B cell (primary cell): ENCODE measurements at regions of chr19 and their contacts with region 1.

Region 1: GRCh38 chr19:5189318-5189607 is 151.3 kb downstream of the PTPRS start:
- DNase-seq: no peak
- ATAC-seq: no peak
- H3K4me3 ChIP-seq: no peak overlapping the region
- H3K4me3 Mint-ChIP-seq: no peak overlapping the region
- H3K27ac ChIP-seq: no peak overlapping the region
- H3K27ac Mint-ChIP-seq: no peak overlapping the region
- H3K4me1 ChIP-seq: peaks cover 0 to 3% of the 10 kb centered on the region in 2 donors
- H3K4me1 Mint-ChIP-seq: no peaks in the 10 kb centered on the region
- H3K27me3 ChIP-seq: no peaks in the 10 kb centered on the region
- H3K27me3 Mint-ChIP-seq: peaks cover 22% of the 10 kb centered on the region
- CTCF ChIP-seq: no peak

Region 2: DNA sequence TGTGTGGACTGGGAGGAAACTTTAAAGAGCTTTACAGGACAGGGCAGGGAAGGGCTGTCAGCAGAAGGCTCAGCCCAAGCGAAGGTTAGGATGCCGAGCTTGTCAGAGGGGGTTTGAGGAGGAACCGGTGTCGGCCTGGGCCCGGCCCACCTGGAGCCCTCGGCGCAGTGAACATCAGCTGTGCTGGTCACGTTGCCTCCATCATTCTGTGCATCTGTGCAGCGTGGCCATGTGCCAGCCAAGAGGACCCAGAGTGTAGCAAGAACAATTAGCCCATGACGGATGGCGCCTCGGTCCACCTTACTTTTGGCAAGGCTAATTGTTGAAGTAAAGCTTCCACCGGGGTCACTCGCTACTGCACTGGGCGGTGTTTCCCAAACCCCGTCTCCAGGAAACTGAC is 10.0 kb before region 1 on chr19:
- CTCF ChIA-PET with region 1: no interaction called
- POLR2A ChIA-PET with region 1: interaction called, 11 read pairs
- intact Hi-C with region 1: no loop called
- DNase-seq: no peak
- ATAC-seq: no peak
- H3K4me3 ChIP-seq: no peak overlapping the region
- H3K4me3 Mint-ChIP-seq: no peak overlapping the region
- H3K27ac ChIP-seq: no peak overlapping the region
- H3K27ac Mint-ChIP-seq: no peak overlapping the region
- H3K4me1 ChIP-seq: no peaks in the 10 kb centered on the region
- H3K4me1 Mint-ChIP-seq: no peaks in the 10 kb centered on the region
- H3K27me3 ChIP-seq: no peaks in the 10 kb centered on the region
- H3K27me3 Mint-ChIP-seq: peaks cover 5% of the 10 kb centered on the region
- CTCF ChIP-seq: no peak